Right ventricle myocardium inferior (tissue), 1 donor: ENCODE measurements at regions of chr13 and their contacts with region 1.

Region 1: GRCh38 chr13:31044377-31045285 is 112.2 kb downstream of the TEX26 start:
- DNase-seq: peak; percentile 88
- ATAC-seq: peak; percentile 84

Region 2: GRCh38 chr13:30132623-30133553 is 911.7 kb before region 1 on chr13:
- intact Hi-C with region 1: loop called (anchors 10 kb)
- DNase-seq: peak; percentile 98
- ATAC-seq: peak; percentile 95

Region 3: DNA sequence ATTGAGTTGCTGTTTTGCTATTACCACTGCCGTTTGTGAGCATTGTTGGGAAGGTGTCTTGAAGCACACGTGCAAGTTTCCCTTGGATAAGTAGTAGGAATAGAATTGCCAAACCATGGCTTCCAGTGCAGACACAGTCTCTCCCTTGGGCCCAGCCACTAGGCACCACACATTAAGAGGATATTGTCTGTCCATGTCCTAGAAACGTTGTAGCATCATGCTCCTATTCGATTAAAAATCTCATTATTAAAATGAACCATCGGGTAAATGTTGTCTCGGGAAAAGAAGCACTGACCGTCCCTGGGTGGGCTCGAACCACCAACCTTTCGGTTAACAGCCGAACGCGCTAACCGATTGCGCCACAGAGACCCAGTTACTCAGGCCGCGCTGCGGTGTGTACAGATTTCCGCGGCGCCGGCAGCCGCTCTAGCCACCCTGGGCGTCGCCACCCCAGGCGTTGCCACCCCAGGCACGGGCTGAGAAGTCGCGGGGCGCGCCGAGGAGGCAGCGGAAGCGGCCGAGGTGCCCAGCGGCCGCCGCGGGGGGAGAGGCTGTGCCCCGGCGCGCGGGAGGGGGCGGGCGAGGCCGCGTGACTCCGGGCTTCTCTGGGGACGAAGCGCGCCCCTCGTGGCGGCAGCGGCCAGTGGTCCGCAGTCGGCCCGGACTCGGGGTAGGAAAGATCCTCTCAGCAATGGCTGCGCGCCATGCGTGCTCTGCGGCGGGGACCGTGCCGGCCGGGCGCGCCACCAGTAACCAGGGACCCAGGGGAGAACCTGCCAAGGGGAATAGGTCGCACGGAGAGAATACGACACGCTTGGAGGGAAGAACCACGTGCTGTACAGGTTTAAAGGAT is 370.7 kb before region 1 on chr13:
- intact Hi-C with region 1: loop called (anchors 10 kb)
- DNase-seq: peak; percentile 95
- ATAC-seq: peak; percentile 95

Region 4: DNA sequence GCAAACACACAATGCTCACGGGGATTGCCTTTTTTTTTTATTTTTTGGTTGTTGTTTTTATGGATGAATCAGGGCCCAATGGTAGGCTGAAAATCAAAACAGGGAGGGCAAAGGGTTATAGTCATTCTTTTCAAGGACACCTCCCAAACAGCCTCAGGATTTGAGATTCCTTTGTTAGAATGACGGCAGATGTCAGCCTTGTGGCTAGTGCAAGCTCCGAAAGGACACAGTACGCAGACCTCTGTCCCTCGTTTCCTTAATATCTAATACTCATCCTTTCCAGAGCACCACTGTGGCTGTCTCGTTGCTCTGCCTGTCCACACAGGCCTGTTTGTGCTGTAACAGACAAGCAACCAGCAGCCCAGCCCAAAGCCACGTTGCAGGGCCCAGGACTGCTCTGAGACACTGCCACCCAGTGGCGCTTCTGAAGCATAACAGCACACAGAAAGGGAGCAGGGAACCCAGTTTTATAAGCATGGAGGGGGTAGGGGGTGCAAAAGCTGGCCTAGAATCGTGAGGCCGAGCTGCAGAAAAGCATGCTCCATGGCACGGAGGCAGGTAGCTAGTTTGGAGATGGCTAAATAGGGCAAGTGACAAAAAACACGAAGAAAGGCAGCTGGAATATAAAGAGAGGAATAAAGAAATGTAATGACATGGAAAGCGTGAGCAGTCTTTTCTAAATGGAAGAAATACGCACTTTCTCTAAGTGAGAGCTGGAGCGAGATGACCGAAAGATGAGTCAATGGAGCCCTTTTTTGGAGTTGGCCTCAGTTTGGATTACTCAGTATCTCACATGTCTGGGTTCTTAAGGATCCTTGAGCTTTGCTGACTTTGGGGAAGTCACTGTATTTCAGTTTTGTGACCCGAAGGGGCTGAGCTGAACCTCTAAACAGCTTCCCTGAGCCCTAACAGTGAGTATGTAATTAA is 179.2 kb before region 1 on chr13:
- intact Hi-C with region 1: loop called (anchors 5 kb)
- DNase-seq: peak; percentile 89
- ATAC-seq: peak; percentile 81